Left lung (tissue), 14 donors: ENCODE measurements at regions of chr15 and their contacts with region 1.

Region 1: DNA sequence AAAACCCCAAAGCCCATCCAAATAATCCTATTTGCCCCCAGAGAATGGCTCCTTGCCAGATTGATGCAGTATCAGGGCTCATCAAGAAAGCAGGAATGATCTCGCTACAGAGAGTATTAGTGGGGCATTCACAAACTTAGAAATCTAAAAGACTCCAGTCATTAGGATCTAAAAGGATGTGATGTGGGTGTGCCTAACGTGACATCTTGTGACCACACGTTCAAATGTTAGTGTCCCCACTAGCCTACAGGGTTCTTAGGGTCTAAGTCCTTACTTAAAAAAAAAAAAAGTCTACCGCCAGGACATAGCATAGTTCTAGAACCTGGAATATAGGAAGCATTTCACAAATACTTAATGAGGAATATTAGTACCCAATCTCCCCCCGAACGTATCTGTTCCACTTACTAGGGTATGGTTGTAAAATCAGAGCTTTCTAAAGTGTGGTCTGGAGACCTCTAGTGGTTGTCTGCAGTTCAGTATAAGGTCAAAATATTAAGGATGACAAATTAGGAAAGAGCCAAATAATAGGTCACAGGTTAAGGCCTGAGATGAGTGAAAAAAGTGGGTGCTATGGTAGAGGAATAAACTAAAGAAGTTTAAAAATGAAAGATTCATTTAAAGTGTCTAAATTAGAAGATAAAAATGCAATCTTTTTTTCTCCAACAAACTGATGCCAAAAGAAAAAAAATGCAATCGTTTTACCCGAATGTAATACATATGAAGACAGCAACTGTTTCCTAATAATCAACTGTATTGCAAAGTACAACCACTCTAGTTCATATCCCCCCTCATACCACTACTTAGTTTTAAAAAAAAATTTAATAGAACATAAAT is 4.2 kb upstream of the CHRM5 start:
- DNase-seq: peak in 1 of 4 donors; percentile 37
- ATAC-seq: peak; percentile 81
- H3K4me3 ChIP-seq: no peak overlapping the region
- H3K27ac ChIP-seq: no peak overlapping the region
- H3K4me1 ChIP-seq: no peaks in the 10 kb centered on the region
- H3K27me3 ChIP-seq: no peaks in the 10 kb centered on the region
- CTCF ChIP-seq: peak in 1 of 2 donors; percentile 46

Region 2: DNA sequence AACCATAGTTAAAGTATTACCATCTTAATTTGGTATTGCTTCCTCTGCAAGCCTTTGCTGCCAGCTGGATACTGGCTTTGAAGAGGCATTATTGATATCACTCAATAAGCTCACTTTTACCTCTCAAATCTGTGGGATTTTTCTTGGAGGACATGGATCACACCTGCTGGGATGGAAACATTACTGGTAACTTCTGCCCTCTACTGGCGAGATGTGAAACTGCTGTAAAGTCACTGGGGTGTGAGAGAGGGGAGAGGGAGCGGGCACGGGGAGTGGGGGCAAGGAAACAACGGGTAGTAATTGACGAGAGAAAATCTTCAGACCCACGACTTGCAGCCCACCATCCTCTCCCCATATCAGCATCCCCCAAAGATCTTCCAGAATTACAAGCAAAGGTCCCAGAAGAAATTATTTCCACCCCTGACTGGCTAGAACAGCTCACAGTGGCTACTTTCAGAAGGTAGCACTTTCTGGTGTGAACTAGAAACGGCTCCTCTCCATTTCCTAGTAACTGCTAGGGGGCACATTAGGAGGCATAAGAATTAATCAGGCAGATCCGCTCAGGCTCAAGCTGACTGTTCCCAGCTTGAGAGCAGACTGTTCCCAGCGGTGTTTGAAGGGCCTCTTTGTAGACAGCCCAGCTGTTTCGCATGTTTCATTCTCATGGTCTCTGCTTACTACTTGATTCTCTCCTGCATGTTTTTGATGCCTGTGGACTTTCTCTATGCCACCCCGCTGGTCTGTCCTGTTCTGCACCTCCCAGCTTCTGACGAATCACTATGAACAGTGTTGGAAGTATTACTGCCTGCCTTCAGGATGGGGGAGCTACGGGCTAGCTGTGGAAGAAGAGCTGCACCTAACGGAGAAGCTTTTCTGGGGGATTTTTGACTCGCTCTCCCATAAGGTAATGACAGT is 226.1 kb before region 1 on chr15:
- intact Hi-C with region 1: loop called in 1 of 2 experiments (anchors 10 kb)
- DNase-seq: no peak
- ATAC-seq: peak; percentile 84
- H3K4me3 ChIP-seq: no peak overlapping the region
- H3K27ac ChIP-seq: no peak overlapping the region
- H3K4me1 ChIP-seq: no peaks in the 10 kb centered on the region
- H3K27me3 ChIP-seq: no peaks in the 10 kb centered on the region
- CTCF ChIP-seq: peak; percentile 61 to 63

Region 3: DNA sequence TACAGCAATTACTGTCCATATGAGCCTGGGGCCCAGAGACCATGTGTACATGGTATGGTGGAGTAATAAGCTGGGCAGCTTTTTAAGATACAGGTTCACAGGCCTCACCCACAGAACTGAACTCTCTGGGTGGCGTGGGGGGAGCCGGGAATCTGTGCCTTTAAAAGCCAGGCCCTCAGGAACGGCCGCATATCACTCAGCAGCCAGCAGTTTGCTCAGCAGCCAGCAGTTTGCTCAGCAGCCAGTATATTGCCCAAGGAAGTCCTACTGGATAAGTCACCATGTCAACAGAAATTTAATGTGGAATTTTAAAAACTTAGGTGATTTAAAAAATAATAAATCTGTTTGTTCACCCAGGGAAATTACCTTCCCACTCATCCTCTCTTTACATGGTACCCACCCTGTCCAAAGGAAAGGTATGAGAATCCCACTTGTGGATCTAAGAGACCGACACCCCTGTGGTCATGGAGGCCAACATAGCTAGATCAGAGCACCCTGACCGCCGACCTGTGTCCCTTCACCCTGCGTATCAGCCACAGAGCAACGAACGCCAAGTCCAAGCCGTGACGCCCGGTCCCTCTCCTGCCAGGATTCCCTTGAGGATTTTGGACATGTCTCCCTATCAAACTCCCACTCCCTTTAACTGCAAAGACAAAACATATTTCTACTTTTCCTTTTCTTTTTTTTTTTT is 91.5 kb before region 1 on chr15:
- intact Hi-C with region 1: no loop called
- DNase-seq: no peak
- ATAC-seq: no peak
- H3K4me3 ChIP-seq: no peak overlapping the region
- H3K27ac ChIP-seq: no peak overlapping the region
- H3K4me1 ChIP-seq: no peaks in the 10 kb centered on the region
- H3K27me3 ChIP-seq: no peaks in the 10 kb centered on the region
- CTCF ChIP-seq: no peak

Region 4: GRCh38 chr15:34055853-34056595 is 92.0 kb after region 1 on chr15:
- intact Hi-C with region 1: no loop called
- DNase-seq: no peak
- ATAC-seq: peak; percentile 48
- H3K4me3 ChIP-seq: no peak overlapping the region
- H3K27ac ChIP-seq: peak overlapping the region in 1 of 2 donors; percentile 48
- H3K4me1 ChIP-seq: no peaks in the 10 kb centered on the region
- H3K27me3 ChIP-seq: no peaks in the 10 kb centered on the region
- CTCF ChIP-seq: no peak

Region 5: GRCh38 chr15:34133511-34133910 is 169.5 kb after region 1 on chr15:
- intact Hi-C with region 1: no loop called
- DNase-seq: no peak
- ATAC-seq: no peak
- H3K4me3 ChIP-seq: no peak overlapping the region
- H3K27ac ChIP-seq: no peak overlapping the region
- H3K4me1 ChIP-seq: no peaks in the 10 kb centered on the region
- H3K27me3 ChIP-seq: no peaks in the 10 kb centered on the region
- CTCF ChIP-seq: no peak